PC-3 (cell line): ENCODE measurements at regions of chr10 and their contacts with region 1.

Region 1: DNA sequence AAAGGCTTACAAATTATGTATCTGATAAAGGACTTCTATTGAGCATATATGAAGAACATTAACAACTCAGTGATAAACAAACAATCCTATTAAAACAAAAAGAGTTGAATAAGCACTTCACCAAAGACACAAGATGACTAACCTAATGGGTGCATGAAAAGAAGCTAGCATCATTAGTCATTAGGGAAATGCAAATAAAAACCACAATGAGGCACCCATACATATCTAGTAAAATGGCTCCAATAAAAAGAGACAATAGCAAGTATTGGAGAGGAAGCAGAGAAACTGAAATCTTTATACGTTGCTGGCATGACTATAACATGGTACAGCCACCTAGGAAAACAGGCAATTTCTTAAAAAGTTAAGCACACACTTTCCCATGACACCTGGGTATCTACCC is 77.6 kb upstream of the ZMIZ1 start:
- DNase-seq: peak; percentile 100
- ATAC-seq: peak; percentile 97
- H3K4me3 ChIP-seq: 0 out of 2 replicates have a peak overlapping the region, but pooled peaks have one; percentile 0
- H3K27ac ChIP-seq: peak overlapping the region; percentile 36
- H3K4me1 ChIP-seq: peaks cover 19% of the 10 kb centered on the region
- H3K27me3 ChIP-seq: no peaks in the 10 kb centered on the region
- CTCF ChIP-seq: no peak; the same call in 1 of the 2 replicates

Region 2: GRCh38 chr10:78805176-78805575 is 186.0 kb before region 1 on chr10:
- CTCF ChIA-PET with region 1: no interaction called
- POLR2A ChIA-PET with region 1: no interaction called
- intact Hi-C with region 1: loop called (anchors 1 kb)
- DNase-seq: peak; percentile 100
- ATAC-seq: peak; percentile 90
- H3K4me3 ChIP-seq: no peak overlapping the region
- H3K27ac ChIP-seq: peak overlapping the region; percentile 40
- H3K4me1 ChIP-seq: peaks cover 59% of the 10 kb centered on the region
- H3K27me3 ChIP-seq: no peaks in the 10 kb centered on the region
- CTCF ChIP-seq: no peak